ENCODE measurements at regions of chr4 and their contacts with region 1.

Region 1: GRCh38 chr4:15144249-15144966 is 142.1 kb downstream of the CPEB2 start:
- DNase-seq: no peak
- ATAC-seq: no peak

Region 2: GRCh38 chr4:15066140-15066539 is 78.3 kb before region 1 on chr4:
- intact Hi-C with region 1: loop called (anchors 5 kb)
- DNase-seq: no peak
- ATAC-seq: no peak